Spleen (tissue), 13 donors: ENCODE measurements at regions of chr10 and their contacts with region 1.

Region 1: DNA sequence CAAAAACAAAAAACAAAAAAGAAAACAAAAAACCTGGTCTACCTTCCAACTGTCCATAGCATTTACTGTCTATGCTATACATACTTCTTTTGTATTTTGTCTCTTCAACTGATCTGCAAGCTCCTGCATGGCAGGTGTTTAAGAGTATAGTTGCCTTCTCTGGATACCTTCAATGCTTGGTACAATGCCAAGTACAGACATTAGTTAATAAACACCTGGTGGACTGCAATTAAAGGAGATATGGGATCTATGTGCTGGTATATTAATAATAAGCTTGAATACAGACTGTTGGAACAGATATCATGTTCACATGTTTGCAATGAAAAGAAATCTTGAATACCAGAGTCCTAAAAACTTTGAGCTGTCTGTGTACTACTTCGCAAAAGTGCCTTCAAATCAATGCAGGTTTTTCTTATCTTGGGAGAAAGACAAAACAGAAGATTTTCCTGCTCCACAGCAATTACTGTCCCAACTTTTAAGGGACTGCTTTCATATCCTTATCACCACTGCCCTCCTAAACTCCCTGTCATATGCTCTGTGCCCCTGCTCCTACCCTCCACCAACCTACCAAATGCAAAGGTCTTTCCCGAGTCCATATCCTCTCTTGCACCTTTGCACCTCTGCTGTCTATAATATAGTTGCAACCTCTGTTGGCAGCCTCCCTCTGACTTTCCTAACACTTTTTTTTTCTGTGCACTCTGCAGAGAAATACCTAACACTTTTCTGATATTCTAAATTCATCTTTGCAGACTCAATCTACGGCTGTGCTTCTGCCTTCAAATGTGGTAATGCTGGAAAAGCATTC is 85.1 kb downstream of the DNMBP start:
- DNase-seq: no peak
- H3K4me3 ChIP-seq: no peak overlapping the region
- H3K27ac ChIP-seq: no peak overlapping the region
- H3K4me1 ChIP-seq: peaks cover 0 to 31% (median 12%) of the 10 kb centered on the region in 6 donors
- H3K27me3 ChIP-seq: no peaks in the 10 kb centered on the region
- CTCF ChIP-seq: no peak
- POLR2A ChIP-seq: no peak

Region 2: DNA sequence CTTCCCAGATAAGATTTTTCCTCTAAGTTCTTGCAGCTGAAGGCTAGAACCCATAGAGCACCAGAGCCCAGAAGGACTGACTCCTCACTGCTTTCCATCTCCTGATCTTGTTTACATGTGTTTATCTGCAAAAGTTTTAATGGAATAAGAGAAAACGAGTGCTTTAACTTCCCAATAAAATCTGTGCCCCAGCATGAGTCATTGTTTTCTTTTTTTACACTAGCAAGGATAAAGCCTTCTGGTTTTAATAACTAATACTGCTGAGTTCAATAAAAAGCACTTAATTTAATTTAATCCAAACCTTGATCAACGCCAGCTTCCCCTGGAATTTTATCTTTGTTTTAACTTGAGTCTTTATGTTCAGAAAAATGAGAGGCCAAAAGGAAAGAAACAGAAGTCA is 916.6 kb before region 1 on chr10:
- intact Hi-C with region 1: no loop called
- DNase-seq: no peak
- H3K4me3 ChIP-seq: no peak overlapping the region
- H3K27ac ChIP-seq: no peak overlapping the region
- H3K4me1 ChIP-seq: no peaks in the 10 kb centered on the region
- H3K27me3 ChIP-seq: peaks cover 0 to 5% (median 0%) of the 10 kb centered on the region in 7 donors
- CTCF ChIP-seq: no peak
- POLR2A ChIP-seq: no peak

Region 3: DNA sequence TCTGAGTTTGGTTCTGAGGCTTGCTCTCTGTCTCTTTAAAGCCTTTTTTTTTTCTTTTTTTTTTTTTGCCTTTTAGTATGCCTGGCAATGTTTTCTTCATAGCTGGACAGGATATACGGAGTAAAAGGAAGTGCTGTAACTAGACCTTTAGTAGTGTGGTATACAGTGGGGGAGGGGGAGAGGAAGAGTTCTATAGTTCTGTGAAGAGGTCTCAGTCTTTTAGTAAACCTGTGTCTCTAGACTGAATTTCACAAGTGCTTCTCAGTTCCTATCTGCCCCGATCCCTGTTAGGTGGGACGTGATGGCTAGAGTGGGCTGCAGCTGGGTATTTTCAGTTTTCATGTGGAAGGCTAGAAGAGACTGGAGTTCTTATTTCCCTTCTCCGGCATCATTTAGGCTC is 145.3 kb before region 1 on chr10:
- intact Hi-C with region 1: no loop called
- DNase-seq: no peak
- H3K4me3 ChIP-seq: peak overlapping the region in 1 of 8 donors; percentile 8
- H3K27ac ChIP-seq: peak overlapping the region; percentile 23 to 86 (median 81)
- H3K4me1 ChIP-seq: peaks cover 0 to 55% (median 12%) of the 10 kb centered on the region in 6 donors
- H3K27me3 ChIP-seq: no peaks in the 10 kb centered on the region
- CTCF ChIP-seq: no peak
- POLR2A ChIP-seq: no peak

Region 4: DNA sequence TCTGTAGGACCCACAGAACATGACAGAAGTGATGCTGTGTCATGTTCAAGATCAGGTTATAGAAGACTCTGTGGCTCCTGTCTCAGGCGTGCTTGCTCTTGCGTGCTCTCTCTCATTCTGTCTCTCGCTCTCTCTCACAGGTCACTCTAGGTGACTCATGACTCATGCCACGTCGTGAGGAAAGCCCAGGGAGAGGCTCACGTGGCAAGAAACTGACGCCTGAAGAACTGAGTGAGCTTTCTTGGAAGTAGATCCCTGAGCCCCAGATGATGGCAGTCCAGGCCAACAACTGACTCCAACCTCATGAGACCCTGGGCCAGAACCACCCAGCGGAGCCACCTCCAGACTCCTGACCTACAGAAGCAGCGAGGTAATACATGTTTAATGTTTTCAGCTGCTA is 18.2 kb before region 1 on chr10:
- intact Hi-C with region 1: loop called (anchors 2 kb)
- DNase-seq: no peak
- H3K4me3 ChIP-seq: no peak overlapping the region
- H3K27ac ChIP-seq: no peak overlapping the region
- H3K4me1 ChIP-seq: no peaks in the 10 kb centered on the region
- H3K27me3 ChIP-seq: no peaks in the 10 kb centered on the region
- CTCF ChIP-seq: no peak
- POLR2A ChIP-seq: no peak

Region 5: DNA sequence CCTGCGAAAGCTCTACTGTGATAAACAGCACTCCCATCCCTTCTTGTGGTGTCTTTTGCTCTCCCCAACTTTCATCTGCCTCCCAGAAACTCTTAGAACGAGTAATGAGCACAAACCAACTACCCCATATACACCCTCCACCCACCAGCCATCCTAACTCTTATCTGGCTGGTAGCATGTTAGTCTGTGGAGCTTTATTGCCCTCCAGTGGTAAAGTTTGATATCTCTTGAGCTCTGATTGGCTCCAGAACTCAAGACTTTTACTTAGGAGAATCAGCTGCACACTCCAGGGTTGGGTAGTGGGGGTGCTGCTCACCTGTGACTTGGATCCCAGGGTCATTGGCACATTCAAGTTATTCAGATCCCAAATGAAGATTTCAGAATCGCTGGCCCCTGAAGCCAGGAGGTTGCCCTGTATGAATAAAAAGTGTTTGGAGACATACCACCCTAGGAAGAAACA is 584.1 kb after region 1 on chr10:
- intact Hi-C with region 1: no loop called
- DNase-seq: no peak
- H3K4me3 ChIP-seq: no peak overlapping the region
- H3K27ac ChIP-seq: peak overlapping the region in 3 of 8 donors; percentile 46 to 66 (median 50)
- H3K4me1 ChIP-seq: peaks cover 0 to 48% (median 20%) of the 10 kb centered on the region in 6 donors
- H3K27me3 ChIP-seq: no peaks in the 10 kb centered on the region
- CTCF ChIP-seq: peak in 9 of 11 experiments; percentile 28 to 69 (median 51)
- POLR2A ChIP-seq: no peak